GM10248 (cell line): ENCODE measurements at regions of chr1 and their contacts with region 1.

Region 1: DNA sequence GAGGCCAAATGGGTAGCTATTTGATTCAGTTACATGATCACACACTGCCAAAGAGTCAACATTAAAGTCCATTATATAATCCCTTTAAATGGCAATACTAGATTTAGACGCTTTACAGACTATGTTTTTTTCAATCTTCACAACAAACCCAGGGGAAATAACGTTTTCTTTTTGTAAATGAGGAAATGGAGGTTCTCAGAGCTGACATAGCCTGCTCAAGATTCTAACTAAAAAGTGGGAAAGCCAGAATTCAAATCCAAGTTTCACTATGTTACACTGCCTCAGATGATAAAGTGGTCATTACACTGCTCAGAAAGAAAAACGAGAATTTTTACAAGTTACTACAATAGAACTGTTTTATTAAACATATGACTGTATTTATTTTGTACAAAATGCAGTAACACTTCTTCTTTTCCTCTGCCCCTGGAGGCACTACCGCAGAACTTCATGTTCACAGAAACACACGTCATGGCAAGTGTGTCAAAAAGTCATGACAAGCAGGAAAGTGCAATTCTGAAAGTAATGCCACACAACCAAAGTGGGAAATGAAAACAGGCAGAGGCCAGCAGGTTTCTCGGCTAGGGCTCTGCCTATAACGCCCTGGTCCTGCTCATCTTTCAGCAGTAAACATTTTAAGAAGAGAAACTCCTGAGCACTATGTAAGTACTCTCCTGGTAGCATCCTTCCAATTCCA is 19.0 kb downstream of the THEMIS2 start:
- DNase-seq: peak; percentile 58
- CTCF ChIP-seq: no peak

Region 2: GRCh38 chr1:27575840-27576331 is 315.5 kb before region 1 on chr1:
- CTCF ChIA-PET with region 1: no interaction called
- POLR2A ChIA-PET with region 1: no interaction called
- DNase-seq: peak; percentile 59
- CTCF ChIP-seq: peak; percentile 25

Region 3: GRCh38 chr1:27872802-27873551 is 18.4 kb before region 1 on chr1:
- CTCF ChIA-PET with region 1: interaction called, 6 read pairs
- POLR2A ChIA-PET with region 1: interaction called, 10 read pairs
- DNase-seq: no peak
- CTCF ChIP-seq: no peak

Region 4: DNA sequence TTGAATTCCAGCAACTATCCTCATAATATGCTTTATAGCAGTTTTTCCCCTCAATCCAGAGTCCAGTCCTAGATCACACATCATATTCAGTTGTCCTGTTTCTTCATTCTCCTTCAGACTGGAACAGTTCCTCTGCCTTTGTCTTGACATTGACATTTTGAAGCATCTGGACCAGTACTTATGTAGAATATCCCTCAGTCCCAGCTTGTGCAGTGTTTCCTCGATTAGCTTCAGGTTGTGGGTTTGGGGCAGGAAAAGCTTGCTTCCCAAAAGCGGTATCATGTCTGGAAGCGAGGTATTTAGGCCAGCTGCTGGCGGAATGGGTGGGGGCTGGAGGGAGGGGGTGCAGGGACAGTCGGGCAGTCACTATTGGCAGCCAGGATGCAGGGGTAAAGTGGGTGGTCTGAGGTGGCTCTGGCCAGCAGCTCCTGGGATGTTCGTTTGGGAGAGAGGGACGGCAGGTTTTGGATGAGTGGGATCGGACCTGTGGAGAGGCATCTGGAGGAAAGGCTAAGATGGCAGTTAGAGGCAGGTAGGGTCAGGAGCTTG is 12.5 kb before region 1 on chr1:
- CTCF ChIA-PET with region 1: interaction called, 6 read pairs
- POLR2A ChIA-PET with region 1: interaction called, 10 read pairs
- DNase-seq: no peak
- CTCF ChIP-seq: no peak